ENCODE measurements at regions of chr11 and their contacts with region 1.

Region 1: GRCh38 chr11:32792948-32793475 is 1.4 kb downstream of the CCDC73 start:
- DNase-seq: no peak
- H3K4me3 ChIP-seq: no peak overlapping the region
- H3K27ac ChIP-seq: no peak overlapping the region
- H3K27me3 ChIP-seq: no peaks in the 10 kb centered on the region
- CTCF ChIP-seq: peak; percentile 74

Region 2: DNA sequence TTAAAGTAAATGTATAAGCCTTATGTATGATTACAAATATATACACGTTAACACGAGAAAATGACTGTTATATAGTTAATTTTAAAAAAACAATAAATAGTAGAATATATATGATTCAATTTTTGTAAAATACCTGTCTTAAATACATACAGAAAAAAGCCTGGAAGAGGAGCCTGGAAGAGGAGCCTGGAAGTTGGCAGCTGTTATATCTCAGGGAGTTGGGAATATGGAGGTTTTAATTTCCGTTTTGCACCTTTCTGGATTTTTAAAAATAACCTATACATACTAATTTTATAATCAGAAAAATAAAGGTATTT is 469.2 kb before region 1 on chr11:
- CTCF ChIA-PET with region 1: interaction called, 97 read pairs
- POLR2A ChIA-PET with region 1: interaction called, 5 read pairs
- DNase-seq: no peak
- H3K4me3 ChIP-seq: no peak overlapping the region
- H3K27ac ChIP-seq: no peak overlapping the region
- H3K27me3 ChIP-seq: no peaks in the 10 kb centered on the region
- CTCF ChIP-seq: no peak

Region 3: GRCh38 chr11:32779136-32779535 is 13.9 kb before region 1 on chr11:
- CTCF ChIA-PET with region 1: interaction called, 10 read pairs
- POLR2A ChIA-PET with region 1: no interaction called
- DNase-seq: no peak
- H3K4me3 ChIP-seq: no peak overlapping the region
- H3K27ac ChIP-seq: no peak overlapping the region
- H3K27me3 ChIP-seq: peaks cover 4% of the 10 kb centered on the region
- CTCF ChIP-seq: no peak

Region 4: GRCh38 chr11:32809313-32809712 is 16.3 kb after region 1 on chr11:
- CTCF ChIA-PET with region 1: interaction called, 10 read pairs
- POLR2A ChIA-PET with region 1: no interaction called
- DNase-seq: peak; percentile 48
- H3K4me3 ChIP-seq: no peak overlapping the region
- H3K27ac ChIP-seq: no peak overlapping the region
- H3K27me3 ChIP-seq: peaks cover 6% of the 10 kb centered on the region
- CTCF ChIP-seq: peak; percentile 90